Endothelial cell of umbilical vein (primary cell): ENCODE measurements at regions of chr1 and their contacts with region 1.

Region 1: GRCh38 chr1:147389532-147390524 is 147.3 kb downstream of the CHD1L start:
- DNase-seq: peak; percentile 39
- H3K4me3 ChIP-seq: no peak overlapping the region
- H3K27ac ChIP-seq: no peak overlapping the region
- H3K4me1 ChIP-seq: no peaks in the 10 kb centered on the region
- H3K27me3 ChIP-seq: peaks cover 0 to 3% of the 10 kb centered on the region in 2 experiments
- CTCF ChIP-seq: peak; percentile 43 to 57
- POLR2A ChIP-seq: no peak

Region 2: DNA sequence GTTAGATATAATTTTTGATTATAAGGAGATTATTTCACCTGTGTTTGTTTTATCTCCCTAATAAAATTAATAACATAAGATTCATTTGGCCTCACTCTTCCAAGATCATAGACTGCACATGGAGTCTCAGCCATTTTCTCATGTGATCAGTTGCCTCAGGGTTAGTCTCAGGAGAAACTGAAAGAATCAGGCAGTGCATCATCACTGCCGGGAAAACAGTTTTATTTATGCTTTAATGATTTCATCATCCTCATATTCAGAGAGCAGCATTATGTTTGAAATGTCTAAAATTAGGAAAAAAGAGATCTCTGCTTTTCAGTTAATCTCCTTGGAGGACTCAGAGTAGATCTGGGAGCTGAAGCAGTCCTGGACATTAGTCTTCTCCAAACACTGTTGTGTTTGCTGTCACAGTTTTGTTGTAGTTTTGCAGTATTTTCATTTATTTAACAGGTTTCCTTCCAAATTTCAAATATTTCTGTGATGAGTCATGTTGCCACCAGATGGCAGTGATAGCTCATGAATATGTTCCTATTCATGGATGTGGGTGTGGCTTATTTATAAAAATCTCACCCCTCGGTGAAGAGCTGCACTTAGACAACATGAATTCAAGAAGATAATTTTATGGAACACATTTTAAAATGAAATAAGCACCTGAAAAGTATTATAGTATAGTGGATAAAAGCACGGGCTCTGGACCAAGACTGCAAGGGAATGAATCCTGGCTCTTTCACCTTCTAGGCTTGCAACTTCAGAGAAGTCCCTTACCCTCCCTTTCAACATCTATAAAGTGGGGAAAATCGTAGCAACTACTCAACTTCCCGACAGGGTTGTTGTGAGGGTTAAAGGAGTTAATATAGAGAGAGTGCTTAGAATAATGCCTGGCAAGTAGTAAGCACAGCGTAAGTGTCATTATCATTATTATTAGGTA is 116.2 kb before region 1 on chr1:
- CTCF ChIA-PET with region 1: interaction called, 210 read pairs
- POLR2A ChIA-PET with region 1: no interaction called
- dilution Hi-C with region 1: no loop called
- intact Hi-C with region 1: loop called (anchors 1 kb)
- DNase-seq: peak; percentile 77
- H3K4me3 ChIP-seq: no peak overlapping the region
- H3K27ac ChIP-seq: peak overlapping the region; percentile 48
- H3K4me1 ChIP-seq: peaks cover 14% of the 10 kb centered on the region
- H3K27me3 ChIP-seq: no peaks in the 10 kb centered on the region
- CTCF ChIP-seq: peak; percentile 28 to 35
- POLR2A ChIP-seq: no peak

Region 3: DNA sequence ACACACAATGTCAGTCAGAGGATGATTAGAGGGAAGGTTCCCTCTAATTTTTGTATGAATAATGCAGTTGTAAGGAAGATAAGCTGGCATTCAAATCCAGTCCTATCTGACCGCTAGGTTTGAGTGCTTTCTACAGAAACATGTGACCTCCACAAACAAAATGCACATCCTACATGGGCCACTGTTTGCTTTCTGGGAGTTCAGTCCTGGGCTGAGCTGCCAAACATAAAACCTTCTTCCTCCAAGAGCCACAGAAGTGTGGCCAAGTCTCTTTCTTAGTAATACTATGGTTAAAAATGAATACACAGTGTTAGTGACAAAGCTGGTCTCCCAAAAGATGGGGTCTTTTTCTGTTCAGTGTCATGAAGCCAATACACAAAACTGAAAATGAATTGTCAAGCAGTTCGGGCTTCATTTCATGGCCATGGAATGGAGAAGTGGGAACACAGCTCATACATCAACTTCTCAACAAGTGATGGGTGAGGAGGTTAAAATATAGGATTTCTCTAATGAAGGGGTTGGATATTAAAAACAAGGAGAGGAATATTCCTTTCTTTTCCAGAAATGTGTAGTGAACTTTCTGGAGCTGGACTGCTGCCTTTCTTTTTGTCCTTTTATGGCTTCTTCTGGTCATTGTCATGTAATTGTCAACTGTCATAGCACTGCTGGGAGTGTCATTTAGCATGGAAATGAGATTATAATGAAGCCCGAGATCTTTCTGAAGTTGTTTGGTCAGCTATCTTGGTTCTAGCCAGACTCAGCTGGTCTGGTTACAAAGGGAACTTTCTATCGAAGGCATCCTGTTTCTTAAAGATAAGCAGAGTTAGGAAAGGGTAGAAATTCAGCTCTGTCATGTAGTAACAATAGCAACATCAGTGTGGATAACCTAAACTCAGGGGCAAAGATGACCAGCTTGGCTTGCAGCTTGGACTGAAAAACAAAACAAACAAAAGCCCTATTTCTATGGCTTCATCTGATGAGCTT is 12.3 kb before region 1 on chr1:
- CTCF ChIA-PET with region 1: interaction called, 40 read pairs
- POLR2A ChIA-PET with region 1: no interaction called
- dilution Hi-C with region 1: no loop called
- intact Hi-C with region 1: no loop called
- DNase-seq: no peak
- H3K4me3 ChIP-seq: no peak overlapping the region
- H3K27ac ChIP-seq: no peak overlapping the region
- H3K4me1 ChIP-seq: no peaks in the 10 kb centered on the region
- H3K27me3 ChIP-seq: no peaks in the 10 kb centered on the region
- CTCF ChIP-seq: no peak
- POLR2A ChIP-seq: no peak

Region 4: DNA sequence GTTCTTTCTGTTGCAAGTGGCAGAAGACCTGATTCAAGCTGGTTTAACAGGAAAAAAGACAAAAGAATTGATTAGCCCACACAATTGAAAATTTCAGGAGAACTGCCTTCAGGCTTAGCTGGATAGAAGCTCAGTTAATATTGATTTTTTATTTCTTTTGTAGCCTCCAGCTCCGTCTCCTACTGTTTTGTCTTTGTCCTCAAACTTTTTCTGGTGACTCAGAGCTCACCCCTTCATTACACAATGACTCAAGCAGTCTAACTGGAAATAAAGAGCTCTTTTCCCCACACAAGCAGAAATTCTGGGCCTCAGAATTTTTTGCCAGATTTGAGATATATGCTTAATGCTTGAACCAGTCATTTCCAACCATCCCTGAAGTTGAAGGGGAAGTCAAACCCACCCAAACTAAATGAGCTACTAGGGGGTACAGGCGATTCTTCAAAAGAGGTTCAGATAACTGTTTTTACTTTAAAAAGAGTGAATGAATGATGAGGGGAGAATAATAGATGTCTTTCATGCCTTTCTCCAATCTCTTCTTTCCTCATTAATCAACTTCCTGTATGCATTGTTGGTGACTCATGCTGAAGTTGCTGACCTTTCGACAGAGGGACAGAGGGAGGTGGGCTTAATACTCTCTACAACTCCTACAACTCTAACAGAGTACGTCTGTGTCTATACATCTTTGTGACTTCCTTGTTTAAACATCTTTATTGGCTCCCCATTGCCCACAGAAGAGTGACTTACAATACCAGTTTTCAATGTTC is 286.6 kb after region 1 on chr1:
- CTCF ChIA-PET with region 1: no interaction called
- POLR2A ChIA-PET with region 1: no interaction called
- dilution Hi-C with region 1: no loop called
- intact Hi-C with region 1: no loop called
- DNase-seq: peak; percentile 39
- H3K4me3 ChIP-seq: no peak overlapping the region
- H3K27ac ChIP-seq: peak overlapping the region; percentile 70
- H3K4me1 ChIP-seq: peaks cover 18% of the 10 kb centered on the region
- H3K27me3 ChIP-seq: no peaks in the 10 kb centered on the region
- CTCF ChIP-seq: no peak
- POLR2A ChIP-seq: no peak